Heart right ventricle (tissue), 16 donors: ENCODE measurements at regions of chr3 and their contacts with region 1.

Region 1: GRCh38 chr3:105868742-105869530 is at the start of gene CBLB:
- DNase-seq: peak; percentile 92 to 94
- ATAC-seq: peak; percentile 93 to 98 (median 94)
- H3K4me3 ChIP-seq: peak within 1 kb of the TSS; percentile 67 to 95 (median 92)
- H3K27ac ChIP-seq: peak within 1 kb of the TSS; percentile 95 to 99 (median 98)
- H3K4me1 ChIP-seq: peaks cover 0 to 50% (median 40%) of the 10 kb centered on the region in 9 donors
- H3K27me3 ChIP-seq: no peaks in the 10 kb centered on the region
- CTCF ChIP-seq: no peak
- total RNA-seq, gene CBLB: 31.2 to 72.7 (median 46.0) TPM

Region 2: DNA sequence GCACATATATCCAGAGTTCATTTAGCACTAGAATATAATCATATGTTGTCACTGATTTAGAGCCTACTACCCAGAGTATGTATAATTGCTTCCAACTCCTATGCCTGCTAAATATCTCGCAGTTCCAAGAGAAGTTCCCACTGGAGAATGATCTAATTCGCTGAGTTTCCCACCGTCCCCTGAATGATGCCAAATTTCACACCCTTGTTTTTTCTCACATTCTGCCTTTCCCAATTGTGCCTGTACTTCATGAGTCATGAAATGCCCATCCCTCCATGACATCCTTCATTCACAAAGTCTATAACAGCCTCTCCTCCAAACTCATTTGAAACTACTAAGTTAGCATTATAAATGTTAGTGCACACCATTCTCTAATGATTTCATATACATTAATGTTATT is 177.3 kb before region 1 on chr3:
- intact Hi-C with region 1: loop called in 7 of 10 experiments (anchors 5 to 10 kb)
- DNase-seq: no peak
- ATAC-seq: peak in 7 of 8 donors; percentile 31 to 89 (median 49)
- H3K4me3 ChIP-seq: no peak overlapping the region
- H3K27ac ChIP-seq: peak overlapping the region in 2 of 10 donors; percentile 6 to 9
- H3K4me1 ChIP-seq: peaks cover 0 to 37% (median 14%) of the 10 kb centered on the region in 9 donors
- H3K27me3 ChIP-seq: no peaks in the 10 kb centered on the region
- CTCF ChIP-seq: no peak

Region 3: DNA sequence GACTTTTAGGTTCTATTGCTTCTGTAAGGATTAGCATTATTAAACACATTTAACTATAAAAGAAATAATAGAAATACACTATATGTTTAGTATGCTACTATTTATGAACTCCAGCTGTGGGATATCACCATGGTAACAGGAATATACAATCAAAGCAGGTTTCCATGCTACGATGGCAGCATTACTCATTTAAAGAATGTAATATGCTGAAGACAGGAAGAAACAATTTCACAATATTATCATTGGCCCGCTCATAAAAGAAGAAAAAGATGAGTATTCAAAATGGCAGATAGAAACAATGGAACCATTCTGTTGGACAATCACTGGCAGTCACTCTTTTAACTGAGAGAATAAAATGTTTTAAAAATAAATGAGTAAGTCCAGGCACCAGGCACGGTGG is 153.6 kb before region 1 on chr3:
- intact Hi-C with region 1: loop called in 3 of 10 experiments (anchors 10 kb)
- DNase-seq: no peak
- ATAC-seq: peak in 1 of 8 donors; percentile 27
- H3K4me3 ChIP-seq: no peak overlapping the region
- H3K27ac ChIP-seq: no peak overlapping the region
- H3K4me1 ChIP-seq: peaks cover 0 to 11% (median 0%) of the 10 kb centered on the region in 9 donors
- H3K27me3 ChIP-seq: no peaks in the 10 kb centered on the region
- CTCF ChIP-seq: no peak

Region 4: DNA sequence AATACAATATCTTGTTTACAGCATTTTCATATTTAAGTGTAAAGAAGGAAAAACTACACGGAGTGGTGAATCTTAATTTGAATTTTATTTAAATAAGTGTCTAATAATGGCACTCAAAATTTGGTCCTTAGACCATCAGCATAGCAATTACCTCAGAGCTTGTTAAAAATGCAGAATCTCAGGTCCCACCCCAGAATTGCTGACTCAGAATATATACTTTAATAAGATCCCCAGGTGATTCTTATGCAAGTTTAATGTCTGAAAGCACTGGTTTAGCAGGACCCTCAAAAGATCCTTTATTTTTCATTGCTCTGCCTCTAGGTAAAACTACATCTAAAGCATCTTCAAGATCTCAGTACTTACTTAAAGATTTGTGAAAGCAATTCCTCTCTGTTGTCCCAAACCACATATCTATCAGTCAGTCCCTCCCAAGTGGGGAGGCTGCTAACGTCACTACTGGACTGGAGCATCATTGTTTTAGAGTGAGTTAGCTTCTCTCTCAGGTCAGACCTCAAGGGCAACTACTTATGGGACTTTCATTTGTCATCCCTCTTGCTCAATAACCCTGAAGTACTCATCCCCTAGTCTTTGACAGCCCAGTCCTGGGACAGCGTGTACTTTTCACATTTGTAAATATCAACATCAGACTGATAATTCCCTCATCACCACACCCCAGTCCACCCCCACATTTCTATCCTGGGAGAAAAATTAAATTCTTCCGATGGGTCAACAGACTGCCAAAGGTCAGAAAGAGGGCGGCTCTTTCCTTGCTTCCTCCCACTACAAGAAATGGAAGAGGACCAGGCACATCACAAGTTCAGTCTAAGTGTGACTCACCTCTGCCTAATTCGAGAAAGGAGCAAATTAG is 76.8 kb before region 1 on chr3:
- intact Hi-C with region 1: loop called in 3 of 10 experiments (anchors 5 kb)
- DNase-seq: peak; percentile 56 to 68
- ATAC-seq: peak; percentile 75 to 96 (median 90)
- H3K4me3 ChIP-seq: no peak overlapping the region
- H3K27ac ChIP-seq: peak overlapping the region; percentile 67 to 84 (median 78)
- H3K4me1 ChIP-seq: peaks cover 11 to 64% (median 57%) of the 10 kb centered on the region in 9 donors
- H3K27me3 ChIP-seq: no peaks in the 10 kb centered on the region
- CTCF ChIP-seq: no peak

Region 5: DNA sequence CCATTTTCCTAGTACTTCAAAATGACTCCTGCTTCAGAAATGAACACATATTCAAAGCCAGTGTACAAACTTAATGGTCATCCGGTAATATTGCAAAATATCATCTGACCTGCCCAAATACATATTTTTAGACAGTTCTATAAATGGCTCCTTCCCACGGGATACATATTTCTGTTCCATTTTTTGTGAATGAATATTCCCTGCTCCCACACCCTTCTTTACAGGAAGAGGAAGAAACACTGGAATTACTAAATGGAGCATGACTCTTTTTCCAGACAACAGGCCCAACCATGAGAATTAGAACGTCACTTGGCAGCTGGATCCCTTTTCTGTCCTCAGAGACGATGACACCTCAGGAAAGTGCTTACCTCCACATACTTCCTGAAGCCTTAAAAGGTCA is 37.9 kb after region 1 on chr3:
- intact Hi-C with region 1: loop called in 4 of 10 experiments (anchors 2 to 5 kb)
- DNase-seq: peak in 1 of 2 donors; percentile 75
- ATAC-seq: peak; percentile 87 to 97 (median 95)
- H3K4me3 ChIP-seq: no peak overlapping the region
- H3K27ac ChIP-seq: peak overlapping the region in 8 of 10 donors; percentile 61 to 82 (median 74)
- H3K4me1 ChIP-seq: peaks cover 0 to 39% (median 34%) of the 10 kb centered on the region in 9 donors
- H3K27me3 ChIP-seq: no peaks in the 10 kb centered on the region
- CTCF ChIP-seq: no peak